Ovary (tissue), 10 donors: ENCODE measurements at regions of chr3 and their contacts with region 1.

Region 1: DNA sequence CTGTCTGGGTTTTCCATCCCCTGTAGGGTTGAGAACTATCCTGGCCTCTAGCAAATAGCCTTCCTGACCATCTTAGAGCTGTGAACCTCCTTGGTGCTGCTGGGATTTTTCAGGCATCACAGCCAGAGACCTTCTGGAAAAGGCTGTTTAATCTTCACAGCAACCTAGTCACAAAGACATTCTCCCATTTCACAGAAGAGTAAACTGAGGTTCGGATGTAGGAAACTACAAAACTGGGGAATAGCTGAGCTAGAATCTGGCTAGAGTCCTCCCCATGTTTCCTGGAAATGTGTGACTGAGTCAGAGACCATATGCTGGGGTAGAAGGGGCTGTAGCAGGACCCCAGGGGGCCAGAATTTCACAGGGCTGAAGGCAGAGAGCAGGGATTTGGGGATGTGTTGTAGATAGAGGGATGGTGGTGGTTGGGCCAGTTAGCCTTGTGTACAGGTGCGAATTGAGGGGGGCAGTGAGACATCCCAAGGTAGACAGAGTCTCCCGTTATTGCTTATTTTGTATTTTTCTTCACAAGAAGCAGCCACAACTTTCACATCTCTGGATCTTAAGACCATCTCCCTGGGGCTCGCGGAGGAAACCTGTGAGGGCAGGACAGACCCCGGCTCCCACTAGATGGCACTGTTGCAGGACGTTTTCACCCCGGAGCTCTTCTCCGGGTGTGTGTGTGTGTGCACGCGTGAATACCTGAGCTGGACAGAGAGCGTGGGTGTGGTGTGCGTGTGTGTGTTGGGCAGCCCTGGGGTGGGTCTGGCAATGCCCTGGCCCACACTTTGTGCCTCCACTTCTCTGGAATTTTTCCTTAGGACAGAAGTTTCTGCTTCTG is 66.9 kb upstream of the PRR23C start:
- DNase-seq: peak; percentile 80 to 89 (median 87)
- H3K4me3 ChIP-seq: no peak overlapping the region
- H3K27ac ChIP-seq: no peak overlapping the region
- H3K4me1 ChIP-seq: peaks cover 5% of the 10 kb centered on the region
- H3K27me3 ChIP-seq: no peaks in the 10 kb centered on the region
- CTCF ChIP-seq: peak in 2 of 3 donors; percentile 72 to 74
- EP300 ChIP-seq: no peak
- POLR2A ChIP-seq: no peak

Region 2: GRCh38 chr3:139006051-139006716 is 105.4 kb before region 1 on chr3 and contains the start of gene PRR23A:
- intact Hi-C with region 1: loop called in 1 of 4 experiments (anchors 10 kb)
- DNase-seq: no peak
- H3K4me3 ChIP-seq: no peak within 1 kb of the TSS
- H3K27ac ChIP-seq: no peak within 1 kb of the TSS
- H3K4me1 ChIP-seq: no peaks in the 10 kb centered on the region
- H3K27me3 ChIP-seq: no peaks in the 10 kb centered on the region
- CTCF ChIP-seq: no peak
- EP300 ChIP-seq: no peak
- POLR2A ChIP-seq: no peak
- total RNA-seq, gene PRR23A: not detected

Region 3: GRCh38 chr3:139329345-139329850 is 217.8 kb after region 1 on chr3:
- intact Hi-C with region 1: loop called (anchors 2 to 5 kb)
- DNase-seq: peak; percentile 89 to 96 (median 94)
- H3K4me3 ChIP-seq: no peak overlapping the region
- H3K27ac ChIP-seq: no peak overlapping the region
- H3K4me1 ChIP-seq: no peaks in the 10 kb centered on the region
- H3K27me3 ChIP-seq: no peaks in the 10 kb centered on the region
- CTCF ChIP-seq: peak; percentile 98 to 99 (median 99)
- EP300 ChIP-seq: no peak
- POLR2A ChIP-seq: no peak